ENCODE measurements at regions of chr7 and their contacts with region 1.

Region 1: DNA sequence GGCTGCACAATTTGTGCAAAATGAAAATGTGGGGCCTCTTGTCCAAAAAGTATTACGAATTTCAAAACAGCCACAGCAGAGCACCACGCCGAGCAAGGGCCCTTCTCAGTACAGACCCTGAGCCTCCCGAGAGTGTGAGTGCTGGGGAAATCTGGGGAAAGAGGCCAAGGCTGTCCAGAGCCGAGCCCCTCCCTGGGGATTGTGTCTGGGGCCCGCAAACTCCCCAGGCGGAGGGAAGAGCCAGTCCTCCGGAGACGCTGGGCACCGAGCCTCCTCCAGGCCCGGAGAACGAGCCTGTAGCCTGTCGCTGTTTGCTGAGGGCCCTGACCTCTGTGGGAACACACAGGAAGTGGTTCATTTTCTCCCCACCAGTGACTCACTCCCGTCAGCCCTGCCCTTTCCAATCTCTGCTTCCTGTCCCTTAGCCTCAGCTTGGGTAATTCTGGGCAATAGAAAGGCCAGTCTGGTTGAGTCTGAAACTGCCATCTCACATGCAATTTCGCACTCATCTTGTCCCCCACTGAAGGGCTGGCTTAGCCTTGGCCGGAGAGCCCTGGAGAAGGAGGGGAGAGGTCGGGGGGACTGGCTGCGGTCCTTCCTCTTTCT is 19.5 kb upstream of the GNA12 start:
- DNase-seq: peak; percentile 66
- H3K4me3 ChIP-seq: no peak overlapping the region
- H3K27me3 ChIP-seq: no peaks in the 10 kb centered on the region
- CTCF ChIP-seq: no peak

Region 2: DNA sequence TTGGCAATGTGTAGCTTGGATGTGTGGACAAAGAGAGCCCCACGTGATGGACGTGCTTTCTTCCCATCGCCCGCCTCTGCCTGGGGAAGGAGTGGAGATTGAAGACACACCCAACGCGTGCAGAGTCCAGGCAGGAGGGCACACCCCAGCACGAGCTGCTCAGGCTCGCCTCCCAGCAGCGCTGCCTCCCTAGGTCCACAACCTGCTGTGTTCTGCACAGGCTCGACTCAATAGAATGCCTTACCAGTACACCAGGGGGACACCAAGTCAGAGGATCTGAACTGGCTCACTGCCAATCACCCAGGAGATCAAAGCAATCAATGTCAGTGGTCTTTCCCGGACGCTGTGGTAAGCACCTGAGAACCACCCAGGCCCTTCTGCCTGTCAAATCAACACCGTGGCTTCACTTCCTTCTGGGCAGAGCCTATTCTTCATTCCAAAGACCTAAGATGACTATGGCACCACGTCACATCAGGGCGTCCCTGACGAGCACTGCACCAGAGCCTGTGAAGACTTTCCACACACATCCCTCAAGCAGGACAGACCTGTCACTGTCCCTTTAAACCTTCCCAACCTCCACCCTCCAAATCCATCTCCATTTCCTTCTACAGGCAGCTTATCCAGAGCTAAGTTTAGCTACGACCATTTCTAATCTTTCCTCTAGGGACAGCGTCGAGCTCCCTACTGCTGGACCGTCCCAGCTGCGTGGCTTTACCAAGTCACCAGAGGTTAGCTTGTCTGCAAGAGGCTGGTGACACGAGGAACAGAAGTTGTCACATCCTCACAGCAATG is 103.3 kb before region 1 on chr7:
- CTCF ChIA-PET with region 1: interaction called, 10 read pairs
- POLR2A ChIA-PET with region 1: no interaction called
- DNase-seq: no peak
- H3K4me3 ChIP-seq: no peak overlapping the region
- H3K27me3 ChIP-seq: no peaks in the 10 kb centered on the region
- CTCF ChIP-seq: peak; percentile 48; the same call in 1 of the 2 replicates

Region 3: DNA sequence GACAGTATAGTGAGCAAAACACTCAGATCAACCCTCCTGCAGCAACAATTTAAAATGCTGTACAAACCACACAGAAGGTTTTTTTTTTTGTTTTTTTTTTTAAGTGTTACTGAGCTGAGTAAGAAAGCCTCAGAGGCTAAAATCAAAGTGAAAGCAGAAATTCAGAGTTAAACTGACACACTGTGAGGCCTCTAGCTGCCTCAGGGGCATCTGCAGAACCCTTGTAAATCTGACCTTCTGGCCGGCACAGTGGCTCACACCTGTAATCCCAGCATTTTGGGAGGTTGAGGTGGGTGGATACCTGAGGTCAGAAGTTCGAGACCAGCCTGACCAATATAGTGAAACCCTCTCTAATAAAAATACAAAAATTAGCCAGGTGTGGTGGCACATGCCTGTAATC is 12.1 kb before region 1 on chr7:
- CTCF ChIA-PET with region 1: interaction called, 14 read pairs
- POLR2A ChIA-PET with region 1: no interaction called
- DNase-seq: no peak
- H3K4me3 ChIP-seq: no peak overlapping the region
- H3K27me3 ChIP-seq: no peaks in the 10 kb centered on the region
- CTCF ChIP-seq: no peak

Region 4: GRCh38 chr7:2873686-2874551 is 10.4 kb after region 1 on chr7:
- CTCF ChIA-PET with region 1: interaction called, 15 read pairs
- POLR2A ChIA-PET with region 1: no interaction called
- DNase-seq: no peak
- H3K4me3 ChIP-seq: no peak overlapping the region
- H3K27me3 ChIP-seq: no peaks in the 10 kb centered on the region
- CTCF ChIP-seq: no peak

Region 5: GRCh38 chr7:3154912-3155494 is 291.4 kb after region 1 on chr7:
- CTCF ChIA-PET with region 1: interaction called, 14 read pairs
- POLR2A ChIA-PET with region 1: no interaction called
- DNase-seq: peak; percentile 0
- H3K4me3 ChIP-seq: no peak overlapping the region
- H3K27me3 ChIP-seq: no peaks in the 10 kb centered on the region
- CTCF ChIP-seq: peak; percentile 68